Heart left ventricle (tissue), 16 donors: ENCODE measurements at regions of chr7 and their contacts with region 1.

Region 1: DNA sequence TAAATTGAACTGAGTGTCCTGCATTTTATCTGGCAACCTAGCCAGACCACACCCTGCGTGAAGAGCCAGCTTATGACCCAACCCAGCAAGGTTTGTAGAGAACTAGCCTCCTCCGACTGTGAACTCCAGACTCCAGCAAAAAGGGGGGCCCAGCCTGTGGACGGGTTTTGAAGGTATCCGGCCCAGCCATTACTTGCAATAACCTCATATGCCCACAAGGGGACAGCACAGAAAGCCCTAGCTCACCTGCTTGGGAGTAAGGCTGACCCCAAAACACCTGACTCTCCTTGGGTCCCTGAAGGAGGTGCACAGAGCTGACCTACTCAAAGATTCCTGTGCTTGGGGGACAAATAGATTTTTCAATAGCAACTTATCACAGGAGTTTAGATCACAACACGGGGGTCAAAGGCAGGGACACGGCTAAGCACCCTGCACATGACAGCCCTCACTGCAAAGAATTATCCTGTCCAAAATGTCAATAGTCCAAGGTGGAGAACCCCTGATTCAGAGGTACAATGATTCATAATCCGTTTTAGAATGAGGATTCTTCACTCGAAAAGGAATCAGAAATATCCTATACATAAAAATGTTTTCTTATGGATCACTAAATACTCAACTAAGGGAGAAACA is 4.6 kb downstream of the TRPV6 start:
- DNase-seq: peak in 1 of 5 donors; percentile 21
- ATAC-seq: no peak
- H3K4me3 ChIP-seq: no peak overlapping the region
- H3K27ac ChIP-seq: no peak overlapping the region
- H3K4me1 ChIP-seq: no peaks in the 10 kb centered on the region
- H3K27me3 ChIP-seq: peaks cover 0 to 47% (median 4%) of the 10 kb centered on the region in 9 donors
- CTCF ChIP-seq: peak in 11 of 12 donors; percentile 19 to 60 (median 53)
- POLR2A ChIP-seq: no peak

Region 2: DNA sequence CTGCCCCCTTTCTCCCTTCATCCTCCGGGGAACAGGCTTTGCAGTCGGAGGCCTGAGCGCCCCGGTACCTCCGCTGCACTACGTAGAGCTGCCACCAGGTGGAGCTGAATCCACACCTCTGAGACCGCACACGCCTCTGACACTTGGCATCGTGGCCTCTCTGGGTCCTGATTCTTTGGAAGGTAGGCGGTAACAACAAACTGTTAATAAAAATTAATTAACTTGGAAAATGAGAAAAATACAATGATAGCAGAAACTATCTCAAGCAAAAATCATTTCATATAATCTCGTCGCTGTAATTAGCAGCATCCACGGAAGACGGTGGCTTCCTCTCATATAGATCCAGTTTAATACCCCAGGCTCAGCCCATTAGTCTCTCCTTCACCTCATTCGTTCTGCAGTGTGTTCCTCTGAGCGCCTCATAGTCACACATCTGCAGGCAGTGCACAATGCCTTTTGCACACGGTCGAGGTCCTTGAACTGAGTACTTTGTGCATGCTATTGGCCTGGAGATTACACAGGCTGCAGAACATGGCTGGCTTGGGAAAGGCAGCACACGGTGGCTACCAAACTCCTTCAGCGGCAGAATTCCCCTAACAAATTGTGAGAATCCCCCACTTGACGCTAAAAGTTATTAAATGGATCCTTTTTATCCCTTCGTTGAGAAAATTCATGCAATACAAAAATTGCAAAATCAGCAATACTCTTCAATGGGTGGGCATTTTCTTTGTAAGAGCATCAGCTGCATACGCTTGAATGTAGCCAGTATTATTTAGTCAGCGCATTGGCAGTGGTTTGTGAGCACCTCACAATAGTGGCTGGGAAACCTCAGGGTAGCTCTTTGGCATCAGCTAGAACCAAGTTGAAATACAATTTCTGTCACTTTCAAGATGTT is 127.3 kb after region 1 on chr7:
- intact Hi-C with region 1: loop called in 1 of 10 experiments (anchors 2 kb)
- DNase-seq: peak; percentile 62 to 88 (median 80)
- ATAC-seq: peak; percentile 71 to 93 (median 89)
- H3K4me3 ChIP-seq: no peak overlapping the region
- H3K27ac ChIP-seq: no peak overlapping the region
- H3K4me1 ChIP-seq: peaks cover 0 to 3% (median 0%) of the 10 kb centered on the region in 12 donors
- H3K27me3 ChIP-seq: peaks cover 0 to 7% (median 0%) of the 10 kb centered on the region in 9 donors
- CTCF ChIP-seq: peak; percentile 92 to 98 (median 96)
- POLR2A ChIP-seq: no peak